Posterior vena cava (tissue), 2 donors: ENCODE measurements at regions of chr20 and their contacts with region 1.

Region 1: GRCh38 chr20:50242853-50243609 is 52.4 kb downstream of the CEBPB start:
- DNase-seq: no peak

Region 2: DNA sequence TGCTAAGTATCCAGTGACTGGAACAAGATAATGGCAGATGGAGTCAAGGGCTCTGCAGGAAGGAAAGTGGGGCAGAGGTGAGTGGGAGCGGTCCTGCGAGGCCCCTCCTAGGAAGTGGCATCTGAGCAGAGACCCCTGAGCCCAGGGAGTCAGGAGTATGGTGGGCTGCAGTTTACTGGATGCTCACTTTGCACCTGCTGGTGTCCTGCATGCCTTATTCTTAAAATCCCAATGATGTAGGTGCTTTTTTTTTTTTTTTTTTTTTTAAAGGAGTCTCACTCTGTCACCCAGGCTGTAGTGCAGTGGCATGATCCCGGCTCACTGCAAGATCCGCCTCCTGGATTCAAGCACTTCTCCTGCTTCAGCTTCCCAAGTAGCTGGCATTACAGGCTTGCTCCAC is 46.8 kb before region 1 on chr20:
- intact Hi-C with region 1: loop called in 1 of 2 experiments (anchors 1 kb)
- DNase-seq: no peak

Region 3: DNA sequence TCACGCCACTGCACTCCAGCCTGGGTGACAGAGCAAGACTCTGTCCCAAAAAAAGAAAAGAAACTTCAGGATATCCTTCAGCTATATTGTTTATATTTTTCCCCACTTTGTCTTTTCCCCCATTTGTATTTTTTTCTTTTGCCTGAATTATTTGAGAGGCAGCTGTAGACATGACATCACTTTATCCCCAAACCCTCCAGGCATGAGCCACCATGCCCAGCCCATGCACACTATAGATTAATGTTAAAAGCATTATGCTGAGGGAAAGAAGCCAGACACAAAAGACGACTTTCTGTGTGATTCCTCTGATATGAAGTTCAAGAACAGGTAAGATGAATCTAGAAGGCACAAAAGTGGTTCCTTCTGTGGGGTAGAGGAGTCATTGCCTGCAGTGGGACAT is 36.0 kb before region 1 on chr20:
- intact Hi-C with region 1: loop called in 1 of 2 experiments (anchors 2 kb)
- DNase-seq: no peak